WTC11 (cell line): ENCODE measurements at regions of chr6 and their contacts with region 1.

Region 1: DNA sequence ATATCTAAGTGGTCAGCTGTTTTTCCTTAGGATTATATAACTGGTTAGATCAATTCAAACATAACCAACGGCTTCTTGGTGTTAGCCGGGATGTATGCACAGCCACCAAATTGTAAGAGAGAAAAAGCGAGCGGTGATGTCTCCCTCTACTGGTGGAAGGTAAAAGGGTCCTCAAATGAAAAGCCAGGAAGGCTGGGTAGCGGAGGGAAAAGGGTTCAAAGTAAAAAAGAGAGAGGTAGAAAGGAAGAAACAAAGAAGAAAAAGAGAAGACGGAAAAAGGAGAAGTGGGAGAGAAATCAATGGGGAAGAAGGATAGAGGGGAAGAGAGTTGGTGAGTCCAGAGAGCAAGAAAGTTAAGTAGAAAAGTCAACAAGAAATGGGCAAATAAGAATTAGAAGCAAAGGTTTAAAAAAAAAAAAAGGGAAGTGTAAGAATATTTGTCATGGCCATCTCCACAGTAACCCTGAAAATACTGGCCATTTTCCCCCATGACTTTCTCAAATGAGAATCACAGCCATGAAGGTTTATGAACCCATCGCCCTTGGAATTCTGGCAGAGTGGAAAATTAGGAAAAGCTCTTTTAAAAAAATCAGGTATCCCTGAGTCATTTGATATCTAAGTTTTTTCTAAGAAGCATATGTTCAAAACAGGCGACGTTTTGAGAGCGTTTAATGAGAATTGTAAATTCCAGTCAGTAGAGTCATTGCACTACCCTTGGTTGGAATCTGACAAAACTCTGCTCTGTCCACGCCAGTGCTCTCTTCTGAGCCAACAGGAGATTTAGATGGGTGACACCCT is 155.6 kb upstream of the SNX9 start:
- DNase-seq: peak; percentile 54
- ATAC-seq: peak; percentile 35; the same call in 1 of the 2 replicates
- H3K4me3 Mint-ChIP-seq: no peak overlapping the region
- H3K27ac Mint-ChIP-seq: no peak overlapping the region; the same call in 1 of the 2 replicates
- H3K4me1 Mint-ChIP-seq: peaks cover 35% of the 10 kb centered on the region
- H3K27me3 Mint-ChIP-seq: no peaks in the 10 kb centered on the region; the same call in 1 of the 2 replicates
- CTCF ChIP-seq: peak; percentile 53

Region 2: DNA sequence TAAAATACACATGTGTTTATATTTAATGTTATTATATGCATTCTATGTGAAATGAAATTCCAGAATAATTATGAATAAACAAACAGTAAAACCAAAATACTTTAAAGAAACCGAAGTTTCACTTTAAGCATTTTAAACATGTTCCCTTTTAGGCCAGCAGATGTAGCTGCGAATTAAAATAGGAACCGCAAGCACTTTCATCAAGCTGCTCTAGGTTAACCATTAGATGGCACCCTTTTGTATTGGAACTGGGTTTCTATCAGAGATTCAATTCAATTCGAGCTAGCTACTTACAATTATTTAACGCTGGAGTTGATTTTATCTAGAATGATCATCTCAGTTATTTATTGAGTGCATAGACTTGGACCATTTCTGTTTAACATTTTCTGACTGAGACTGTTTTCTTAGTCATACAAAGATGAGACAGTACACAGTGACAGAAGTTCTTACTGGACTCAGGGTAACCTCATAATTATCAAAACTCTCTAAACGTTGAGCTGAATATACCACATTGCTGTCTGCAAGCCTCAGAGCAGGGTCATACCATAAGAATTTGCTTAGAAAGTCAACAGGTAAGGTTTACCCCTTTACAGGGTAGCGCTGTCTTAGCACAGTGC is 352.6 kb before region 1 on chr6:
- CTCF ChIA-PET with region 1: interaction called, 17 read pairs
- POLR2A ChIA-PET with region 1: no interaction called
- DNase-seq: no peak
- ATAC-seq: peak; percentile 80
- H3K4me3 Mint-ChIP-seq: no peak overlapping the region
- H3K27ac Mint-ChIP-seq: no peak overlapping the region
- H3K4me1 Mint-ChIP-seq: no peaks in the 10 kb centered on the region
- H3K27me3 Mint-ChIP-seq: no peaks in the 10 kb centered on the region
- CTCF ChIP-seq: 0 out of 2 replicates have a peak, but pooled peaks have one; percentile 20

Region 3: DNA sequence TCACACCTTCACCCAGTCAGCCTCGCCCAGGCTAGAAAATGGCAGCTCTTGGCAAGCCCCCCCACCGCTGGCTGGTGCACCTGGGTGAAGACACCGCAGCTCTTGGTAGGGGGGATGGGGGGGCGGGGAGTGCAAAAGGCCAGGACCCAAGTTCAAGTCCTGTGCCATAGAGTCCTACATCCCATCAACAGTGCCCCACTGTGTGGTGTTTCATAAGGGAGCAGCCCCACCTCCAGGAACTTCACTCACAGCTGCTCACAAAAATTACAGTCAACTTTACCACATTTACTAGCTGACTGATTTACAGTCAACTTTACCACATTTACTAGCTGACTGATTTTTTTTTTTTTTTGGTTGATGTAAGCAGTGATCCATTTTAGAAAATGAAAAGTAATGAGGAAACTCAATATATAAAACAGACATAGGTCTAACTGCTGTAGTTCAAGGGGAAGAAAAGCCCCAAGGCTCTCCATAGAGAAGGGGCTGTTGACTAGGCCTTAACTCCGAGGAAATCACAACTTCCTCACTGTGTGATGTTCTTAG is 53.3 kb before region 1 on chr6:
- CTCF ChIA-PET with region 1: interaction called, 10 read pairs
- POLR2A ChIA-PET with region 1: no interaction called
- DNase-seq: no peak
- ATAC-seq: no peak
- H3K4me3 Mint-ChIP-seq: no peak overlapping the region
- H3K27ac Mint-ChIP-seq: no peak overlapping the region
- H3K4me1 Mint-ChIP-seq: peaks cover 25% of the 10 kb centered on the region
- H3K27me3 Mint-ChIP-seq: peaks cover 3% of the 10 kb centered on the region
- CTCF ChIP-seq: no peak

Region 4: GRCh38 chr6:157688960-157689599 is 21.7 kb after region 1 on chr6:
- CTCF ChIA-PET with region 1: interaction called, 25 read pairs
- POLR2A ChIA-PET with region 1: no interaction called
- DNase-seq: peak; percentile 53
- ATAC-seq: peak; percentile 91
- H3K4me3 Mint-ChIP-seq: no peak overlapping the region
- H3K27ac Mint-ChIP-seq: no peak overlapping the region
- H3K4me1 Mint-ChIP-seq: peaks cover 6% of the 10 kb centered on the region
- H3K27me3 Mint-ChIP-seq: no peaks in the 10 kb centered on the region; the same call in none of the 2 replicates
- CTCF ChIP-seq: no peak

Region 5: GRCh38 chr6:157756708-157757429 is 89.5 kb after region 1 on chr6:
- CTCF ChIA-PET with region 1: interaction called, 16 read pairs
- POLR2A ChIA-PET with region 1: no interaction called
- DNase-seq: peak; percentile 90
- ATAC-seq: peak; percentile 92
- H3K4me3 Mint-ChIP-seq: no peak overlapping the region
- H3K27ac Mint-ChIP-seq: no peak overlapping the region
- H3K4me1 Mint-ChIP-seq: peaks cover 56% of the 10 kb centered on the region
- H3K27me3 Mint-ChIP-seq: peaks cover 18% of the 10 kb centered on the region
- CTCF ChIP-seq: peak; percentile 73

Region 6: DNA sequence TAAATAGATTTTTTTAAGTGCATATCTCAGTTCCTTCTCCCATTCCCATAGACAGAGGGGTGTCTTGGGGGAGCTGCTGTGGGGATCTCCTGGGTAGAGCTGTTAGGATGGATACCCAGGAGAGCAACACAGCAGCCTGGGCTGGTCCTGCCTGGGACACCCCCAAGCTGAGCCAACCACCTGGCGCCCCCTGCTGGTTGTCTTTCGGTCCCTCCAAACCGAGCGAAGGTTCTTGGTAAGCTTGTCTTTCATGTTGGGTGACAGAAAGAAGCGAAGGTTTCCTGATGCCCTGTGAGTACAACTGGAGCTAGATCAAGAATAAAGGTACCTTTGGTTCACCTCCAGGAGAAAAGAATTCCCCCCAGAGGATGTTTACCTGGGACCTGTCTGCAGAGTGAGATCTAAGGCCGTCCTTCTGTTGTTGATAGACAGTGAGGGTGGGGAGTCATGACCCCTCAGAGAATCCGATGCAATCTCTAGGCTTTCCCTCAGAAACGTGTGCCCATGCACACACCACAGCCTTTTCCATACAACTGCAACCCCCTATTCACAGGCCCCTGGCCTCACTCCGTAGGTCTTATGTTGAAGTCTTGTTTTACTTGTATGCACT is 206.4 kb after region 1 on chr6:
- CTCF ChIA-PET with region 1: interaction called, 34 read pairs
- POLR2A ChIA-PET with region 1: no interaction called
- DNase-seq: peak; percentile 91
- ATAC-seq: peak; percentile 91
- H3K4me3 Mint-ChIP-seq: no peak overlapping the region
- H3K27ac Mint-ChIP-seq: no peak overlapping the region
- H3K4me1 Mint-ChIP-seq: peaks cover 31% of the 10 kb centered on the region
- H3K27me3 Mint-ChIP-seq: no peaks in the 10 kb centered on the region
- CTCF ChIP-seq: peak; percentile 90